Posterior cingulate gyrus (tissue), 11 donors: ENCODE measurements at regions of chr6 and their contacts with region 1.

Region 1: GRCh38 chr6:106223300-106223930 is 102.1 kb downstream of the ATG5 start:
- DNase-seq: peak in 6 of 10 donors; percentile 21 to 66 (median 48)

Region 2: GRCh38 chr6:105192707-105193465 is 1030.5 kb before region 1 on chr6:
- intact Hi-C with region 1: no loop called
- DNase-seq: no peak

Region 3: DNA sequence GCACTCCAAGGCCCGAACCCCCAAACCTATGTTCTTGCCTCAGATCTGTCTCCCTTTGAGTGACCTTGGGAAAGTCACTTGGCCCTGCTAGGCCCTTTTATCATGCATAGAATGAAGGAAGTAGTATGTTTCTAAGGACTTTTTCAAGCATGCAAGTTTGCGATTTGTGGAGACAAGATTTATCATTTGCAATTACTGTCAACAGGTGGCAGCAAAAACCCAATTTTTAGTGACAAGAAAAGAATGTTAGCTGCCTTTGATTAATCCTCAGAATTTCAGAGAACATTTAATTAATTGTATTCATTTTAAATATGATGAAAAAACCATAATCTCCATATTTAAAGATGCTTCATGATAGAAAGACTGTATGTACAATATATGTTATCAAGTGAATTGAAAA is 792.2 kb before region 1 on chr6:
- intact Hi-C with region 1: loop called (anchors 5 kb)
- DNase-seq: no peak

Region 4: GRCh38 chr6:105733565-105734162 is 489.8 kb before region 1 on chr6:
- intact Hi-C with region 1: loop called (anchors 2 kb)
- DNase-seq: no peak

Region 5: DNA sequence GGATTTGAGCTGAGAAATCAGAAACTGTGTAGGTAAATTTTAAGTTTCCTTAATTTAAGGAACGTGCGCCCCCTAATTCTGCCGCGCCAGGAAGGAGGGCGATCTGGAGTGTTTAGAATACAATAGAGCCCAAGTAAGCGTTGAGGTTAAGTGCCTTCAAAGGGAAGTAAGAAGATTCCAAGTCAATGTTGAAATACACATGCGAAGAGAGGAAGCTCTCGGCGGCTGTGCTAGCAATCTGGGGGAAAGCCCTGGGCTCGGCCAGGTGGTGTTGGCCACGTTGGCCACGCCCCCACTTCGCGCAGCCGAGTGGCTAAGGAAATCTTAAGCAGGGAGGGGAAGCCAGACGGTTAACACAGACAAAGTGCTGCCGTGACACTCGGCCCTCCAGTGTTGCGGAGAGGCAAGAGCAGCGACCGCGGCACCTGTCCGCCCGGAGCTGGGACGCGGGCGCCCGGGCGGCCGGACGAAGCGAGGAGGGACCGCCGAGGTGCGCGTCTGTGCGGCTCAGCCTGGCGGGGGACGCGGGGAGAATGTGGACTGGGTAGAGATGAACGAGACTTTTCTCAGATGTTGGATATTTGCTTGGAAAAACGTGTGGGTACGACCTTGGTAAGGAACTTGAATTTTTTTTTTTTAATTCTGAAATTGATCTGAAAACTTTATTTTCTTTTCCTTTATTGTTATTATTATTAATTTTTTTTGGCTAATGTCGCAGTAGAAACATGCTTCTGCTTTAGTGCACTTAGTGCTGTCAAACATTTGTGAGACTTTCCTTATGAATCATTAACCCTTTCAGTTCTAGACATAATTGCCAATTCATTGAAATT is 137.2 kb before region 1 on chr6 and contains the start of gene PRDM1:
- intact Hi-C with region 1: loop called (anchors 5 kb)
- DNase-seq: peak; percentile 16 to 92 (median 40)

Region 6: GRCh38 chr6:106181664-106182418 is 41.6 kb before region 1 on chr6:
- intact Hi-C with region 1: no loop called
- DNase-seq: no peak